Astrocyte of the cerebellum (primary cell): ENCODE measurements at regions of chr10 and their contacts with region 1.

Region 1: GRCh38 chr10:110279407-110279986 is 25.2 kb downstream of the SMNDC1 start:
- DNase-seq: peak; percentile 55
- H3K4me3 ChIP-seq: no peak overlapping the region
- CTCF ChIP-seq: peak; percentile 75

Region 2: GRCh38 chr10:109883859-109884771 is 395.4 kb before region 1 on chr10:
- in situ Hi-C with region 1: loop called (anchors 25 kb)
- DNase-seq: peak; percentile 88
- H3K4me3 ChIP-seq: no peak overlapping the region
- CTCF ChIP-seq: peak; percentile 97

Region 3: DNA sequence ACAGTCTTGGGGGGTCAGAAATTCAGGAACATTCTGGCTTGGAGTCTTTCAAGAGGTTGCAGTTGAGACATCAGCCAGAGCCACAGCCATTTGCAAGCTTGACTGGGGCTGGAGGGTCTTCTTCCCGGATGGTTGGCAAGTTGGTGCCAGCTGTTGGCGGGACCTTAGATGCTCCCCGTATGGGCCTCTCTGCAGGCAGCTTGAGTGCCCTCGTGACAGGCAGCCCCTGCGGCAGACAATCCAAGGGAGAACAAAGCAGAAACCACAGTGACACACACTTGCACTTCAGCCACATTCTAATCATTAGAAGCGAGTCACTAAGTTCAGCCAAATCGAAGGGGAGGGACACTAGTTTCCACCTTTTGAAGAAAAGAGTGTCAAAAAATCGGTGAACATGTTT is 131.5 kb before region 1 on chr10:
- in situ Hi-C with region 1: loop called (anchors 5 kb)
- DNase-seq: no peak
- H3K4me3 ChIP-seq: no peak overlapping the region
- CTCF ChIP-seq: no peak

Region 4: DNA sequence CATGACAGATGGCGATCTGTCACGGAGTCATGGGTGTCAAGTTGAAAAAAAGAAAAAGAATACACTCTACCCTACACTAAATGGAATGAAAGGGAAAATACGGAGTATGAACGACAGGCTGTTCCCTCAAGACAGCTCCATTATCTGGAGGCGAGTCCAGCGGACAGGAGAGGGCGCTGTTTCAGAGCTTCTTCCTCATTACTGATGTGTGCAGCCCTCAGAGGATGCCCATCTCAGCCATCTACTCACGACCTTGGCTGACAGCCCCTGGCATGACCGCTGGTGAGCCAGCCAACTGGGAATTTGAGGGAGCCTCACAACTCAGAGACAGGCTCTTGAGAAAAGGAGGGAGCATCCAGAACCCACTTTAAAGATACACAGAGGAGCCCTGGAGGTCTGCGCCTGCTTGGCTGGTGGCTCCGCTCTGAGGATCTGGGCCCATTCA is 74.8 kb after region 1 on chr10:
- in situ Hi-C with region 1: no loop called
- DNase-seq: peak; percentile 54
- H3K4me3 ChIP-seq: no peak overlapping the region
- CTCF ChIP-seq: peak; percentile 79